Tibial artery (tissue), 4 donors: ENCODE measurements at regions of chr2 and their contacts with region 1.

Region 1: GRCh38 chr2:20378792-20379519 is 28.3 kb upstream of the PUM2 start:
- DNase-seq: peak; percentile 84 to 95
- H3K4me3 ChIP-seq: no peak overlapping the region
- H3K27ac ChIP-seq: peak overlapping the region; percentile 60 to 74
- H3K4me1 ChIP-seq: peaks cover 0 to 19% (median 10%) of the 10 kb centered on the region in 4 donors
- H3K27me3 ChIP-seq: no peaks in the 10 kb centered on the region
- CTCF ChIP-seq: peak; percentile 81

Region 2: DNA sequence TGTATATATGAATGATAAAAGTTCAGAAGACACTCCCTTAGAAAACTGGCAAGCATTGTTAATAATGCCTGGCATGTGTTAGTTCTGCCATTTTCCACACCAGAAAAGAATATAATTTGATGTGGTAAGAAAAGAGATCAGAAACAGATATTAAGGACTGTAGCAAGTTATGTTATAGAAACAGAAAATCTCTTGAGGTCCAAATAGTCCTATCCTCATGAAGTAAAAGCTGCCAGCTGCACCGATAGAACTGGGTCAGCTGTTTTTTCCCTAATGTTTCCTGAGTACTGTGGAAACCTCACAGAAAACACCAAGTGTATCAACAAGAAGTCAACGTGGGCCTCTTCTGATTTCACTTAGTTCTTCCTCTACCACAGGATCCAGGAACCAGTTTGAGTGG is 97.1 kb before region 1 on chr2:
- intact Hi-C with region 1: no loop called
- DNase-seq: no peak
- H3K4me3 ChIP-seq: no peak overlapping the region
- H3K27ac ChIP-seq: no peak overlapping the region
- H3K4me1 ChIP-seq: no peaks in the 10 kb centered on the region
- H3K27me3 ChIP-seq: no peaks in the 10 kb centered on the region
- CTCF ChIP-seq: no peak

Region 3: GRCh38 chr2:20617892-20618467 is 239.0 kb after region 1 on chr2:
- intact Hi-C with region 1: no loop called
- DNase-seq: peak; percentile 99 to 100
- H3K4me3 ChIP-seq: peak overlapping the region; percentile 1 to 2
- H3K27ac ChIP-seq: peak overlapping the region; percentile 97 to 99
- H3K4me1 ChIP-seq: peaks cover 16 to 81% (median 74%) of the 10 kb centered on the region in 4 donors
- H3K27me3 ChIP-seq: no peaks in the 10 kb centered on the region
- CTCF ChIP-seq: peak; percentile 77 to 83

Region 4: DNA sequence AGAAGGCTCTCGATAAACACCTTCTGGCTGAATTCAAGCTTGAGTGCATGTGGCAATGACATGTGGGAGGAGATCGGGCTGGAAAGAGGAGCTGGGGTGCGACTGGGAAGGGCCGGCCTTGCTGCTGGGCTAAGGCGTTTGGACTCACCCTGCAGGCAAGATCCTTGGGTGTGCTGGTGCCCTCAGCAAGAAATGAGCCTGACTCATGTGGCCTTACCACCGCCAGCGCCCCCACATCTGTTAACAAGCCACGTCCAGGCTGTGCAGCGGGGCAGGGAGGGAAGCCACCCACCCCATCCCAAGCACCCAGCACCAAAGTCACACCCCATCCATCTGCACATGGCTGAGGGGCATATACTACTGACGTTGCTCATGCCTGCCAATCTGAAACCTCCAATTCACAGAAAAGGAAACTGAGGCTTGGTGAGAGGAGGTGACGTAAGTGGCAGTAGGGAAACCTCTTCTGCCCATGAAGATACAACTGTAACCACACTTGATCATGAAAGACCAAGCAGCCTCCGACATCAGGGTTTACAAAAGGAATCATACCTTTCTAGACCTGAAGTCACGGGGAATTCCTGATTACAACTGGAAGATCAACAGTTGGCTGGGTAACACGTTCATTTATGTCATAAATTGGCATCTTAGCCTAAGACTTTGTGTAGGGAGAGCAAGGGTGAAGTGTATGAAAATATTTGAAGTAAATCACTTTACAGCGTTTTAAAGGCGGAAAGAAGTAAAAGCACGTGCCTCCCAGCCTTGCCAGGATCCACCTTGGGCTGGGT is 270.8 kb after region 1 on chr2:
- intact Hi-C with region 1: loop called (anchors 5 kb)
- DNase-seq: no peak
- H3K4me3 ChIP-seq: peak overlapping the region; percentile 92 to 97
- H3K27ac ChIP-seq: peak overlapping the region; percentile 98
- H3K4me1 ChIP-seq: peaks cover 0 to 50% (median 37%) of the 10 kb centered on the region in 4 donors
- H3K27me3 ChIP-seq: no peaks in the 10 kb centered on the region
- CTCF ChIP-seq: no peak